ENCODE measurements at regions of chr18 and their contacts with region 1.

Region 1: DNA sequence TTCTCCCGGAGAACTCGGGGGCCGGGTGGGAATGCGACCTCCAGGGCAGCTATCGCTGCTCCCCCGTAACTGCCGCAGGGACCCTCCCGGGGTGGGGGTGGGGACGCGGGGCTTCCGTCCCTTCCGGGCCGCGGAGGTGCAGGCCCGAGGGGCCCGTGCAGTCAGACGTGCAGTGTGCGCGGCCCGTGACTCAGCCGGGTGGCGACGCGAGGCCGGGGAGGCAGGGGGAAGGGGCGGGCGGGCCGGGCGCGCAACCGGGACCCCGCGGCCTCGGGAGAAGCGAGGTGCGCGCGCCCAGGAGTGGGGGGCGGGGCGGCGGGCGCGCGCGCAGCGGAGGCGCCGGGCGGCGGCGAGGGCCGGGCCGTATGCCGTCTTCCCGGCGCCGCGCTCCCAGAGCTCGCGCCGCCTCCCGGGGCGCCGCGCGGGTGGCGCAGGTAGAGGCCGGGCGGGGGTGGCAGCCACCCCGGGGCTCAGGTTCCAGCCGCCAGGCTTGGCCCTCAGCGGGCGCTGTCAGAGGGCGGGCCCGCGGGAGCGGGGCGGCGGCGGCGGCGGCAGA is 25.0 kb upstream of the SMAD7 start:
- DNase-seq: peak in 1 of 2 experiments; percentile 74
- H3K4me3 ChIP-seq: peak overlapping the region; percentile 54 to 86 (median 58)
- H3K27ac ChIP-seq: no peak overlapping the region
- H3K4me1 ChIP-seq: peaks cover 7 to 16% (median 13%) of the 10 kb centered on the region in 4 experiments
- H3K27me3 ChIP-seq: peaks cover 0 to 27% (median 22%) of the 10 kb centered on the region in 4 experiments; a peak in 5 of 7 replicates
- CTCF ChIP-seq: no peak
- EP300 ChIP-seq: no peak
- POLR2A ChIP-seq: no peak
- RAD21 ChIP-seq: no peak

Region 2: DNA sequence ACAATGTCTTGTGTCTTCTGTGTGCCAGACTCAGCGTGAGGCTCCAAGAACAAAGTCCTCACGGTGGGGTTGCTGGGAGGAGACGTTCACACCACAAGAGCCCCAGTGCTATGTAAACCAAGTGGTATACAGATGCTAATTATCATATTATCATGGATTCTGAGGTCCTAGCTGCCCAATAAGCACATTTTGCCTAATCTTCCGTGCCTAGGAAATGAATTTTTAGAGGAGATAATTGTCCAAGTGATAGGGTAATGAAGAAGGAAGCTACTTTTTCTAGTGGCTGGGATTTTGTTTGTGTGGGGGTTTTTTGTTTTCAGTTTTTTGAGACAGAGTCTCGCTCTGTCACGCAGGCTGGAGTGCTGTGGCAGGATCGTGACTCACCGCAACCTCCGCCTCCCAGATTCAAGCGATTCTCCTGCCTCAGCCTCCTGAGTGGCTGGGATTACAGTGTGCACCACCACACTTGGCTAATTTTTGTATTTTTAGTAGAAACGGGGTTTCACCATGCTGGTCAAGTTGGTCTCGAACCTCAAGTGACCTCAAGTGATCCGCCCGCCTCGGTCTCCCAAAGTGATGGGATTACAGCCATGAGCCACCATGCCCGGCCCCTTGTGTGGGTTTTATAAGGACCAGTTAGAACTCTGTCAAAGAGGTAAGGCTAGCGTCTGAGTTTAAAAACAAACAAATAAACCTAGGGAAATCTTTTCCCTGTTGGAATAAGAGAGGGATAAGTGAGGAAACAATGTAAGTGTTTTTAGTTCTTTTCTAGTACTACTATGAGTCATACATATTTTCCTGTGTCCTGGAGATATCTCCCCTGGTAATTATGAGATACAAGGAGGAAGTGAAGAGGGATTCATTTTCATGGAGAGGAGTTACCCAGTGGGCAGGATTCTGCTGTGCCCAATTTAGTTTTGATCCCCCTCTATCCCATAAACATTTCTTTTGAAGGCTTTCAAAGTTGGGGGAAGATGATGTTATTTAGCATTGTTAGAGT is 15.5 kb before region 1 on chr18:
- CTCF ChIA-PET with region 1: interaction called, 8 read pairs
- POLR2A ChIA-PET with region 1: interaction called, 12 read pairs
- DNase-seq: peak in 1 of 2 experiments; percentile 95
- H3K4me3 ChIP-seq: peak overlapping the region in 1 of 4 experiments; percentile 27; a peak in 2 of 8 replicates
- H3K27ac ChIP-seq: no peak overlapping the region
- H3K4me1 ChIP-seq: peaks cover 12 to 24% (median 18%) of the 10 kb centered on the region in 4 experiments
- H3K27me3 ChIP-seq: peaks cover 0 to 3% (median 1%) of the 10 kb centered on the region in 4 experiments; a peak in 2 of 7 replicates
- CTCF ChIP-seq: no peak
- EP300 ChIP-seq: peak in 1 of 2 experiments; percentile 95; a peak in 2 of 3 replicates
- POLR2A ChIP-seq: no peak
- RAD21 ChIP-seq: no peak

Measured in H1 (cell line).